ENCODE measurements at regions of chr7 and their contacts with region 1.

Region 1: DNA sequence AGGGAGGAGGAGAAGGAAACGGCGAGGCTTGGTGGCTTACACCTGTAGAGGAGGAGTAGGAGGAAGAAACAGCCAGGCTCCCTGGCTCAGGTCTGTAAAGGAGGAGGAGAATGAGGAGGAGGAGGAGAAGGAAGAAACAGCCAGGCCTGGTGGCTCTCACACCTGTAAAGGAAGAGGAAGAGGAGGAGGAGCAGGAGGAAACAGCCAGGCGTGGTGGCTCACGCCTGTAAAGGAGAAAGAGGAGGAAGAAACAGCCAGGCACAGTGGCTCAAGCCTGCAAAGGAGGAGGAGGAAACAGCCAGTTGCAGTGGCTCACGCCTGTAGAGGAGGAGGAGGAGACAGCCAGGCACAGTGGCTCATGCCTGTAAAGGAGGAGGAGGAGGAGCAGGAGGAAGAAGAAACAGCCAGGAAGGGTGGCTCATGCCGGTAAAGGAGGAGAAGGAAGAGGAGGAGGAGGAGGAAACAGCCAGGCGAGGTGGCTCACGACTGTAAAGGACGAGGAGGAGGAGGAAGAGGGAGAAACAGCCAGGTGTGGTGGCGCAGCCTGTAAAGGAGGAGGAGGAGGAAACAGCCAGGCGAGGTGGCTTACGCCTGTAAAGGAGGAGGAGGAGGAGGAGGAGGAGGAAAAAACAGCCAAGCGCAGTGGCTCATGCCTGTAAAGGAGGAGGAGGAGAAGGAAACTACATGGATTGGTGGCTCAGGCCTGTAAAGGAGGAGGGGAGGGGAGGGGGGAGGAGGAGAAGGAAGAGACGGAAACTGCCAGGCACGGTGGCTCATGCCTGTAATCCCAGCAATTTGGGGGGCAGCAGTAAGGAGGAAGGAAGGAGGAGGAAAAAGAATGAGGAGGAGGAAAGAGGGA is 14.8 kb upstream of the CRCP start:
- DNase-seq: peak in 4 of 5 donors; percentile 19 to 31 (median 28)
- H3K4me3 ChIP-seq: peak overlapping the region; percentile 18 to 78
- H3K4me3 Mint-ChIP-seq: peak overlapping the region; percentile 85 to 95 (median 90)
- H3K27ac ChIP-seq: peak overlapping the region; percentile 50
- H3K27ac Mint-ChIP-seq: peak overlapping the region; percentile 78 to 96 (median 92)
- H3K4me1 ChIP-seq: peaks cover 7% of the 10 kb centered on the region
- H3K4me1 Mint-ChIP-seq: peaks cover 7 to 12% (median 9%) of the 10 kb centered on the region in 4 donors
- H3K27me3 ChIP-seq: no peaks in the 10 kb centered on the region
- H3K27me3 Mint-ChIP-seq: no peaks in the 10 kb centered on the region

Region 2: GRCh38 chr7:64320547-64321513 is 1779.0 kb before region 1 on chr7:
- CTCF ChIA-PET with region 1: no interaction called
- POLR2A ChIA-PET with region 1: no interaction called
- intact Hi-C with region 1: no loop called
- DNase-seq: no peak
- H3K4me3 ChIP-seq: no peak overlapping the region
- H3K4me3 Mint-ChIP-seq: no peak overlapping the region
- H3K27ac ChIP-seq: no peak overlapping the region
- H3K27ac Mint-ChIP-seq: no peak overlapping the region
- H3K4me1 ChIP-seq: peaks cover 1% of the 10 kb centered on the region
- H3K4me1 Mint-ChIP-seq: peaks cover 10 to 54% (median 21%) of the 10 kb centered on the region in 4 donors
- H3K27me3 ChIP-seq: no peaks in the 10 kb centered on the region
- H3K27me3 Mint-ChIP-seq: no peaks in the 10 kb centered on the region

Region 3: GRCh38 chr7:66114793-66115649 is 15.2 kb after region 1 on chr7 and contains the start of gene CRCP:
- CTCF ChIA-PET with region 1: no interaction called
- POLR2A ChIA-PET with region 1: interaction called, 7 read pairs
- intact Hi-C with region 1: loop called (anchors 1 kb)
- DNase-seq: peak; percentile 83 to 89 (median 84)
- H3K4me3 ChIP-seq: peak within 1 kb of the TSS; percentile 78 to 87
- H3K4me3 Mint-ChIP-seq: peak within 1 kb of the TSS; percentile 88 to 98 (median 96)
- H3K27ac ChIP-seq: peak within 1 kb of the TSS; percentile 82
- H3K27ac Mint-ChIP-seq: peak within 1 kb of the TSS; percentile 88 to 98 (median 95)
- H3K4me1 ChIP-seq: peaks cover 47% of the 10 kb centered on the region
- H3K4me1 Mint-ChIP-seq: peaks cover 31 to 54% (median 41%) of the 10 kb centered on the region in 4 donors
- H3K27me3 ChIP-seq: no peaks in the 10 kb centered on the region
- H3K27me3 Mint-ChIP-seq: no peaks in the 10 kb centered on the region
- total RNA-seq, gene CRCP: 32.8 to 36.8 TPM